ENCODE measurements at regions of chr12 and their contacts with region 1.

Region 1: GRCh38 chr12:71754461-71755145 is at the start of gene RAB21:
- DNase-seq: peak; percentile 97 to 99 (median 99)
- ATAC-seq: peak; percentile 89
- H3K4me3 ChIP-seq: peak within 1 kb of the TSS; percentile 82 to 93
- H3K4me3 Mint-ChIP-seq: peak within 1 kb of the TSS; percentile 95
- H3K27ac ChIP-seq: peak within 1 kb of the TSS; percentile 89 to 91
- H3K27ac Mint-ChIP-seq: peak within 1 kb of the TSS; percentile 98
- H3K4me1 ChIP-seq: peaks cover 22% of the 10 kb centered on the region
- H3K4me1 Mint-ChIP-seq: peaks cover 47% of the 10 kb centered on the region
- H3K27me3 ChIP-seq: no peaks in the 10 kb centered on the region
- H3K27me3 Mint-ChIP-seq: peaks cover 12% of the 10 kb centered on the region
- CTCF ChIP-seq: peak; percentile 21
- total RNA-seq, gene RAB21: 111 to 127 TPM

Region 2: DNA sequence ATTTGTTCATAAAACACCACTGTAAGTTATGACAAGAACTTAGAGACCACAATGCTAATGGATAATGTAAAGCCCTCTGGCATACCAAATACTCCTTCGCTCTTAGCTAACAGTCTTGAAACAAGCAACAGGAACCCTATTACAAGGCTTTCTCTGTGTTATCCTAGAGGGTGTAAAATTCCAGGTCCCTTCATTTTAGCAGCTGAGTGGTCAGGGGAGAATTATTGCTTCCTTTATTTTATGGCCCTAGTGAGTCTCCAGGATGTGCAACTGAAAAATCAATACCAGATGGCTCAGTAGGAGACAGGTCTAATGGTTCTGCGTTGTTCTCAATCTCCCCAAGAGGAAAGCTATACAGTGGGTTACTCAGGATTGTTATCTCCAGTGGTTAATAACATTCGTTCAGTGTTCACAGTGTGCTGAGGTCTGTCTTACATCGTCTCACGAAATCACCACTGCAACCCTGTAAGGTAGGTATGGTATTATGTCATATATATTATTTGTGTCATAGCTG is 1684.1 kb before region 1 on chr12:
- CTCF ChIA-PET with region 1: no interaction called
- POLR2A ChIA-PET with region 1: no interaction called
- intact Hi-C with region 1: no loop called
- DNase-seq: no peak
- ATAC-seq: no peak
- H3K4me3 ChIP-seq: no peak overlapping the region
- H3K4me3 Mint-ChIP-seq: no peak overlapping the region
- H3K27ac ChIP-seq: no peak overlapping the region
- H3K27ac Mint-ChIP-seq: no peak overlapping the region
- H3K4me1 ChIP-seq: no peaks in the 10 kb centered on the region
- H3K4me1 Mint-ChIP-seq: no peaks in the 10 kb centered on the region
- H3K27me3 ChIP-seq: no peaks in the 10 kb centered on the region
- H3K27me3 Mint-ChIP-seq: peaks cover 6% of the 10 kb centered on the region
- CTCF ChIP-seq: no peak

Region 3: DNA sequence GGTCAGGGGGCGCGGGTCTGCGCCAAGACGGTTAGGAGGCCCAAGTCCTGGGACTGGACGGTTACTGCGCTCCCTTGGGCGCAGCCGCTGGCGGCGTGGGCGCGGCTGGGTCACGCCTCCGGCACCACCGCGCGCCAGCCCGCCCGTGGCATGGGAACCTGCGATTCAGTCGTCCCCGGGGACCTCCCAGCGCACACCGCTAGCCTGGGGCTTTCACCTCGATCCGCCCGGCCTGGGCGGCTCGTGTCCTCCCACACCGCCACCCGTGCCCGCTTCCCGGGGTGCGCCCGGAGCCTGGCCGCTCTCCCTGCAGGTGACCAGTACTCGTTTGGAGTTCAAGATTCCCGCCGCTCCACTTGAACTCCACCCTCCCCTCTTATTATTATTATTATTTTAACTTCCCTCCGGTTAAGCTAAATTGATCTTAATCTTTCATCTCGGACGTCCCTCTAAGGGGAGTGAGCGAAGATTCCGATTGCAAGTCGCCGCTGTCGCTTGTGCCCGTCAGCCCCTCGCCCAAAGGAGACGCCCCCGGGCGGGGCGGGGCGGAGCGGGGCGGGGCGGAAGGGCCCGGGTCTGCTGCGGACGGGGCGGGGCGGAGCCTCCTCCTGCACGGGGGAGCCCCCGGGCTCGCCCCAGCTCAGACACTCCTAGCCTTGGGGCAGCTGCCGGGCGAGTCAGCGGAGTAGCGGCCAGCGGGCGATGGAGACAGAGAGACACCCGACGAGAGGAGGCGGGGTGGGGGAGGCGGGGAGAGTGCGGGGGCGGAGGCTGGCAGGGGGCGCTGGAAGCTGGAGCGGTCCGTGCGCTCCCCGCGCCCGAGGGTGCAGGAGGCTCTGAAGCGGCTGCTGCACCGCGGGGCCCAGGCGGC is 1388.7 kb before region 1 on chr12 and contains the start of gene KCNMB4:
- CTCF ChIA-PET with region 1: no interaction called
- POLR2A ChIA-PET with region 1: no interaction called
- intact Hi-C with region 1: loop called in 1 of 2 experiments (anchors 10 kb)
- DNase-seq: peak; percentile 16 to 81 (median 67)
- ATAC-seq: peak; percentile 70
- H3K4me3 ChIP-seq: peak within 1 kb of the TSS; percentile 72 to 79
- H3K4me3 Mint-ChIP-seq: peak within 1 kb of the TSS; percentile 95
- H3K27ac ChIP-seq: peak within 1 kb of the TSS in 1 of 2 experiments; percentile 34
- H3K27ac Mint-ChIP-seq: peak within 1 kb of the TSS; percentile 91
- H3K4me1 ChIP-seq: peaks cover 22% of the 10 kb centered on the region
- H3K4me1 Mint-ChIP-seq: peaks cover 31% of the 10 kb centered on the region
- H3K27me3 ChIP-seq: no peaks in the 10 kb centered on the region
- H3K27me3 Mint-ChIP-seq: no peaks in the 10 kb centered on the region
- CTCF ChIP-seq: no peak
- total RNA-seq, gene KCNMB4: 0.73 to 1.4 TPM

Region 4: GRCh38 chr12:71663561-71664294 is 90.9 kb before region 1 on chr12 and contains the start of gene ZFC3H1:
- CTCF ChIA-PET with region 1: interaction called, 3 read pairs
- POLR2A ChIA-PET with region 1: interaction called, 13 read pairs
- intact Hi-C with region 1: loop called (anchors 1 to 2 kb)
- DNase-seq: peak; percentile 76 to 99 (median 88)
- ATAC-seq: peak; percentile 74
- H3K4me3 ChIP-seq: peak within 1 kb of the TSS; percentile 79 to 94
- H3K4me3 Mint-ChIP-seq: peak within 1 kb of the TSS; percentile 100
- H3K27ac ChIP-seq: peak within 1 kb of the TSS; percentile 92 to 97
- H3K27ac Mint-ChIP-seq: peak within 1 kb of the TSS; percentile 100
- H3K4me1 ChIP-seq: peaks cover 36% of the 10 kb centered on the region
- H3K4me1 Mint-ChIP-seq: peaks cover 55% of the 10 kb centered on the region
- H3K27me3 ChIP-seq: no peaks in the 10 kb centered on the region
- H3K27me3 Mint-ChIP-seq: no peaks in the 10 kb centered on the region
- CTCF ChIP-seq: no peak
- total RNA-seq, gene ZFC3H1: 118 to 121 TPM

Region 5: GRCh38 chr12:71780237-71780822 is 25.7 kb after region 1 on chr12:
- CTCF ChIA-PET with region 1: interaction called, 13 read pairs
- POLR2A ChIA-PET with region 1: no interaction called
- intact Hi-C with region 1: no loop called
- DNase-seq: peak in 8 of 9 experiments; percentile 16 to 65 (median 51)
- ATAC-seq: peak; percentile 48
- H3K4me3 ChIP-seq: no peak overlapping the region
- H3K4me3 Mint-ChIP-seq: no peak overlapping the region
- H3K27ac ChIP-seq: peak overlapping the region in 1 of 2 experiments; percentile 39
- H3K27ac Mint-ChIP-seq: peak overlapping the region; percentile 66
- H3K4me1 ChIP-seq: no peaks in the 10 kb centered on the region
- H3K4me1 Mint-ChIP-seq: peaks cover 11% of the 10 kb centered on the region
- H3K27me3 ChIP-seq: no peaks in the 10 kb centered on the region
- H3K27me3 Mint-ChIP-seq: no peaks in the 10 kb centered on the region
- CTCF ChIP-seq: peak; percentile 78

Region 6: GRCh38 chr12:71840231-71840847 is 85.7 kb after region 1 on chr12:
- CTCF ChIA-PET with region 1: interaction called, 4 read pairs
- POLR2A ChIA-PET with region 1: interaction called, 9 read pairs
- intact Hi-C with region 1: loop called (anchors 1 kb)
- DNase-seq: peak in 3 of 9 experiments; percentile 8 to 39 (median 18)
- ATAC-seq: peak; percentile 21
- H3K4me3 ChIP-seq: peak overlapping the region; percentile 64 to 79
- H3K4me3 Mint-ChIP-seq: peak overlapping the region; percentile 92
- H3K27ac ChIP-seq: peak overlapping the region; percentile 93 to 98
- H3K27ac Mint-ChIP-seq: peak overlapping the region; percentile 98
- H3K4me1 ChIP-seq: peaks cover 32% of the 10 kb centered on the region
- H3K4me1 Mint-ChIP-seq: peaks cover 46% of the 10 kb centered on the region
- H3K27me3 ChIP-seq: no peaks in the 10 kb centered on the region
- H3K27me3 Mint-ChIP-seq: no peaks in the 10 kb centered on the region
- CTCF ChIP-seq: no peak